PC-3 (cell line): ENCODE measurements at regions of chr2 and their contacts with region 1.

Region 1: DNA sequence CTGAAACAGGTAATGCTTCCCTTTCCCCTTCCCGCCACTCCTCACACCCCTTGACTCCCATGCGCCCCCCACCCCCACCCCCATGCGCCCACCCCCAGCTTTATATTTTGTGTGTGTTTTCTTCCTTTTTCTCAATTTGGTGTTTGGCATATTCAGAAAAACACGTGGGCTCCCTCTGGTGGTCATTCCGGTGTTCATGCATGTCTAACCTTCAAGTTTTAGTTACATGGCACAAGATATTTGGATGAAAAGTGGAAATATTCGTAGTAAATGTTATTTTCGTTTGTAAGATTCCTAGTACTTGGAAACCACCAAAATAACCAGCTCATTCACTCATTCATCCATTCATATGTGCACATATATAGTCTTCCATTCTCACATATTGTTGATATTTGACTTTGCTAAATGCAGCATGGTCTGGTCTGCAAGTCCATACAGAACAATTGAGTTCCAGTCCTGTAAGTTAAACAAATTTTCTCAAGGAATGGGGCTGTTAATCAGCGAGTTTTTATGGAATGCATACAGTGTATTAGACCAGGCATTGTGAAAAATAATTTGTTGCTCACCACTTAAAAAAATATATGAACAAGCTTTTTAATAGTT is 143.6 kb upstream of the MAP3K20 start:
- DNase-seq: peak; percentile 79
- ATAC-seq: peak; percentile 58
- H3K4me3 ChIP-seq: no peak overlapping the region; the same call in 1 of the 2 replicates
- H3K27ac ChIP-seq: no peak overlapping the region
- H3K4me1 ChIP-seq: peaks cover 21% of the 10 kb centered on the region
- H3K27me3 ChIP-seq: no peaks in the 10 kb centered on the region
- CTCF ChIP-seq: peak; percentile 74

Region 2: DNA sequence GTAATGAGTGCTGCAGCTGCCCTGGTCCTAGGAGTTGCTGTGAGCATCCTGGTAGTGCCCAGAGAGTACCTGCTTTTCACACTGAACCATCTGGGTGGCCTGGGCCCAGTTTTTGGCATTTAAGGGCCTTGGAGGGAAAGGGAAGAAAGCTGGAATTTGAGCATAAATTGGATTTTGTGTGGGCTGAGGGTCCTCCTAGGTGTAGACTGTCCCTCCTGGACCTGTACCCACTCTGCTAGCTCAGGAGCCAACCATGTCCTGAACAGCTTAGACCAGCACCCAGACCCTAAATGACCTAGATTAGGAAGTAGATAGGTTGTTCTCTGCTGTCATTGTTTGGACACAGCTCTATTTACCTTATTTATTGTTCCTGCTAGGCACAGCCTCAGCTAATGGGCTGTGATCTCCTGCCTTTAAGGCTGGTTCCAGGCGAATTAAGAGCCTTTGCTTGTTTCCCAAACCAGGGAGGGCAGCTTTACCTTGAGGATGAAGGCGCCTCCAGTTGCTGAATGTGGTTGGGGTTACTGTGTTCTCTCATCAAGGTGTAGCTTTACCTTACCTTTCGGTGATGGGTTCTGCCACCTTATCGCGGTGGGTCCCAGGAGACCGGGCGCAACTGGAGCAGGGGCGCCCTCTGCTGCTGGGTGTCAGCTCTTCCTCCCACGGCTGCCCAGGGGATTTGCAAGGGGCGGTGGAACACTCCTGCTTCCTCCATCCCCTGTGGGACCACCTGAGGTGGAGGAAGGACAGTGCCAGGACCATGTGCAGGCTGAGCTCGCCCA is 470.2 kb before region 1 on chr2:
- CTCF ChIA-PET with region 1: no interaction called
- POLR2A ChIA-PET with region 1: no interaction called
- intact Hi-C with region 1: no loop called
- DNase-seq: peak; percentile 73
- ATAC-seq: peak; percentile 33
- H3K4me3 ChIP-seq: no peak overlapping the region
- H3K27ac ChIP-seq: no peak overlapping the region; the same call in 1 of the 2 replicates
- H3K4me1 ChIP-seq: peaks cover 64% of the 10 kb centered on the region
- H3K27me3 ChIP-seq: no peaks in the 10 kb centered on the region
- CTCF ChIP-seq: peak; percentile 96

Region 3: GRCh38 chr2:172806493-172806892 is 125.5 kb before region 1 on chr2:
- CTCF ChIA-PET with region 1: no interaction called
- POLR2A ChIA-PET with region 1: no interaction called
- intact Hi-C with region 1: loop called (anchors 1 kb)
- DNase-seq: peak; percentile 70
- ATAC-seq: peak; percentile 64; the same call in 1 of the 2 replicates
- H3K4me3 ChIP-seq: no peak overlapping the region
- H3K27ac ChIP-seq: no peak overlapping the region
- H3K4me1 ChIP-seq: no peaks in the 10 kb centered on the region
- H3K27me3 ChIP-seq: no peaks in the 10 kb centered on the region
- CTCF ChIP-seq: peak; percentile 93

Region 4: DNA sequence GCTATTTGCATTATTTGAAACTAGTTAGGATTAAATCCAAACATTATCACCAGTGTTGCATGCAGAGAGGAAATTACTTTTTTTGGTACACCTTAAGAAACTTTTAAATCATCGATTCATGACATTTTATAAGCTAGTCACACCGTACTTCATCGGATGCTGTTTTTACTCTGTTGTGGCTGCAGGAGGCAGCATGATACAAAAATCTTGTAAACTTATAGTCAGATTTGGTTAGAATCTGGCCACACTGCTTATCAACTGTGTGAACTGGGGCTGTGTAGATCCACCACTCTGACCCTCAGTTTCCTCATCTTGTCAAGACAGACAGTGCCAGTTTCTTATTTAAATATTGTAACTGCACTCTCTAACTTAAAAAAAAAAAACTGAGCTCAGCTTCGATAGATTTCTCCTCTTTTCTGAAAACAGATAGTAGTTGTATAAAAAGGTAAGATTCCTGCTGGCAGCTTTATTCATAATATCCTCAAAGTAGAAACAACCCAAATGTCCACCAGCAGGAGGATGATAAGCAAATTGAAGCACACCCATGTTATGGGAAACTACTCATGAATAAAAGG is 118.6 kb before region 1 on chr2:
- CTCF ChIA-PET with region 1: interaction called, 37 read pairs
- POLR2A ChIA-PET with region 1: no interaction called
- intact Hi-C with region 1: loop called (anchors 1 kb)
- DNase-seq: peak; percentile 58
- ATAC-seq: peak; percentile 82
- H3K4me3 ChIP-seq: no peak overlapping the region
- H3K27ac ChIP-seq: no peak overlapping the region
- H3K4me1 ChIP-seq: no peaks in the 10 kb centered on the region
- H3K27me3 ChIP-seq: no peaks in the 10 kb centered on the region
- CTCF ChIP-seq: peak; percentile 86

Region 5: DNA sequence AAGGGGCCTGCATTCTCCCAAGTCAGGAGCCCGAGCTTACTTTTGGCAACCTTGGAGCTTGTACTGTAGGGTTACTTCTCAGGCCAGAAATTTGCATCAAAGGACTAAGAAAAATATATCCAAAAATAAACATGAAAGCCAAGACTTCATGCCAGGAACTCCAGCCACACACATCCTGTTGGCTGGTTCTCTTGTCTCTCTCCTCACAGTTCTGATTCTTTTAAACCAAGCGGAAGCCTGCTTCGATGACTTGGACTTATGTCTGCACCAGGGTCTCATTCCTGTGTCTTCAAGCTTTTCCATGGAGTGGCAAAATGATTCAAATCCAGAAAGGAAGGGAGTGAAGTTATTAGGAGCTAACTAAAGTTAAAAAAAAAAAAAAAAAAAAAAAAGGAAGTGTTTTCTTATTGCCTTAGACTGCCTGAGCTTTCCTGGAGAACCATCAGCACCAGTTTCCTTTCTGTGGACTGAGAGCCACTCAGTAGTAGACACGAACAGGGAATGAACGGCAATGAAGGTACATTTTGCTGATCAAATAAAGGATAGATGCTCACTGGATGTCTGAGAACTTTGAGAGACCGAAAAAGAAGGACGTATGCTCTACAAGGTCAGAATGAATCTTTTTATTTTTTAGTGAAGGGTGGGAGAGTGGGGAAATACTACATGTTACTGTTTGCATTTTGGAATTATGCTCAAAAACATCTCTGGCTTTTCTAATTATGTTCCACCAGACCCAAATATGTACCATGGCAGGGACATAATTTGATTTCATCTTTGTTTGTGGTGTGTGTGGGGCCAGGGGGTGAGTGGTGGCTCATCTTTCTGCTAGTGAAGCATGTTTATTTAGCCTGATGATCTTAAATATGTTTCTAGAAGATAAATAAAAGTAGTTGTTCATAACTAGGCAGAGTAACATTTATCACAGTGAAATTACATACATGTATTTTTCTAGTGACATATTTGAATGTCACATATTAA is 110.4 kb before region 1 on chr2:
- CTCF ChIA-PET with region 1: interaction called, 11 read pairs
- POLR2A ChIA-PET with region 1: no interaction called
- intact Hi-C with region 1: no loop called
- DNase-seq: no peak
- ATAC-seq: no peak
- H3K4me3 ChIP-seq: no peak overlapping the region
- H3K27ac ChIP-seq: no peak overlapping the region
- H3K4me1 ChIP-seq: no peaks in the 10 kb centered on the region
- H3K27me3 ChIP-seq: no peaks in the 10 kb centered on the region
- CTCF ChIP-seq: no peak

Region 6: DNA sequence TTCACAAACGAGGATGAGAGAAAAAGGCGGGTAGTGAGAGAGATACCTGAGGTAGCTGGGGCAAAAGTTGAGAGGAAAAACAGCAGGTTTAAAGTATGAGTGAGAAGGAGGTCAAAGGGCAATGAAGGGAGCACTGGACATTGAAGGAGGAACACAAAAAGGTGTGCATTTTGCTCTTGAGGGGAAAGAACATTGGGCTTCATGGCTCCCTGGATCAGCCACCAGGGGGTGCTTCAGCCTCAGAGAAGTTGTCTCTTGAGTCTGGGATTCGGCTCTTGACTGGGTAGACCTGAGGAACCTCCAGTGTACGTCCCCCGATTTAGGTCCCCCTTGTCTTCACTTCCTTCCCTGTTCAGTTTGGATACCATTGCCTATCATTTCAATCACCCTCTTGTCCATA is 67.8 kb before region 1 on chr2:
- CTCF ChIA-PET with region 1: interaction called, 8 read pairs
- POLR2A ChIA-PET with region 1: no interaction called
- intact Hi-C with region 1: loop called (anchors 1 kb)
- DNase-seq: peak; percentile 72
- ATAC-seq: peak; percentile 55
- H3K4me3 ChIP-seq: no peak overlapping the region
- H3K27ac ChIP-seq: no peak overlapping the region
- H3K4me1 ChIP-seq: peaks cover 14% of the 10 kb centered on the region
- H3K27me3 ChIP-seq: no peaks in the 10 kb centered on the region
- CTCF ChIP-seq: peak; percentile 83

Region 7: GRCh38 chr2:172972005-172972619 is 40.1 kb after region 1 on chr2:
- CTCF ChIA-PET with region 1: no interaction called
- POLR2A ChIA-PET with region 1: no interaction called
- intact Hi-C with region 1: loop called (anchors 5 kb)
- DNase-seq: peak; percentile 60
- ATAC-seq: peak; percentile 58
- H3K4me3 ChIP-seq: no peak overlapping the region
- H3K27ac ChIP-seq: no peak overlapping the region
- H3K4me1 ChIP-seq: peaks cover 34% of the 10 kb centered on the region
- H3K27me3 ChIP-seq: no peaks in the 10 kb centered on the region
- CTCF ChIP-seq: peak; percentile 91

Region 8: DNA sequence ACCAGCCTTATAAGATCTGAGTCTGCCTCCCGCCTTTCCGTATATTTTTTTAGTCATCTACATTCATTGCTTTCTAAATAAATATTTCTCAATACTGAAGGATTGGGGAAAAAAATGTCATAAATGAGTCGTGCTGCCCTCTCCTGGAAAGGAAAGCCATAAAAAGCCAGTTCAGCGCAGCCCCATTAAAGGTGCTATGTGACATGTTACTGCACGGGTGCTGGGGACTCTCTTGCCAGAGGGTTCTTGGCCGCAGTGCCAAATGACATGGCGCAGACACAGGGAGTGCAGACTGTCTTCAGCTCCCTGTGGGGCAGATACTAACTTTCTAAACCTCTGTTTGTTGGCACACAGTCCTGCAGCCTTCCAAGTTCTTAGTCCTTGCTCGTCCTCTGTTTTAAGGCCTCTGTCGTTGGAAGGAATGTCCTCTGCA is 89.9 kb after region 1 on chr2:
- CTCF ChIA-PET with region 1: no interaction called
- POLR2A ChIA-PET with region 1: no interaction called
- intact Hi-C with region 1: loop called (anchors 2 kb)
- DNase-seq: peak; percentile 90
- ATAC-seq: peak; percentile 94
- H3K4me3 ChIP-seq: no peak overlapping the region
- H3K27ac ChIP-seq: no peak overlapping the region
- H3K4me1 ChIP-seq: peaks cover 6% of the 10 kb centered on the region
- H3K27me3 ChIP-seq: no peaks in the 10 kb centered on the region
- CTCF ChIP-seq: peak; percentile 83